Ovary (tissue), 10 donors: ENCODE measurements at regions of chr1 and their contacts with region 1.

Region 1: GRCh38 chr1:209627732-209628196 is 24.5 kb downstream of the LAMB3 start:
- DNase-seq: peak; percentile 76 to 90 (median 86)
- H3K4me3 ChIP-seq: no peak overlapping the region
- H3K27ac ChIP-seq: no peak overlapping the region
- H3K4me1 ChIP-seq: peaks cover 8% of the 10 kb centered on the region
- H3K27me3 ChIP-seq: no peaks in the 10 kb centered on the region
- CTCF ChIP-seq: peak; percentile 82 to 92 (median 87)
- EP300 ChIP-seq: no peak
- POLR2A ChIP-seq: no peak

Region 2: GRCh38 chr1:209747580-209748262 is 120.0 kb after region 1 on chr1:
- intact Hi-C with region 1: loop called in 1 of 4 experiments (anchors 5 kb)
- DNase-seq: peak; percentile 93 to 96 (median 95)
- H3K4me3 ChIP-seq: no peak overlapping the region
- H3K27ac ChIP-seq: peak overlapping the region in 1 of 2 donors; percentile 31
- H3K4me1 ChIP-seq: peaks cover 8% of the 10 kb centered on the region
- H3K27me3 ChIP-seq: no peaks in the 10 kb centered on the region
- CTCF ChIP-seq: peak; percentile 81 to 100 (median 99)
- EP300 ChIP-seq: no peak
- POLR2A ChIP-seq: peak; percentile 3